Cardiac septum (tissue), 1 donor: ENCODE measurements at regions of chr2 and their contacts with region 1.

Region 1: GRCh38 chr2:27628767-27629709 is at the starts of genes CCDC121 and GPN1:
- DNase-seq: peak; percentile 95
- total RNA-seq, gene CCDC121: 3.5 TPM
- total RNA-seq, gene GPN1: 17.8 TPM

Region 2: GRCh38 chr2:27582695-27583389 is 46.2 kb before region 1 on chr2 and contains the start of gene ZNF512:
- intact Hi-C with region 1: loop called (anchors 2 kb)
- DNase-seq: peak; percentile 96
- total RNA-seq, gene ZNF512: 20.7 TPM

Region 3: DNA sequence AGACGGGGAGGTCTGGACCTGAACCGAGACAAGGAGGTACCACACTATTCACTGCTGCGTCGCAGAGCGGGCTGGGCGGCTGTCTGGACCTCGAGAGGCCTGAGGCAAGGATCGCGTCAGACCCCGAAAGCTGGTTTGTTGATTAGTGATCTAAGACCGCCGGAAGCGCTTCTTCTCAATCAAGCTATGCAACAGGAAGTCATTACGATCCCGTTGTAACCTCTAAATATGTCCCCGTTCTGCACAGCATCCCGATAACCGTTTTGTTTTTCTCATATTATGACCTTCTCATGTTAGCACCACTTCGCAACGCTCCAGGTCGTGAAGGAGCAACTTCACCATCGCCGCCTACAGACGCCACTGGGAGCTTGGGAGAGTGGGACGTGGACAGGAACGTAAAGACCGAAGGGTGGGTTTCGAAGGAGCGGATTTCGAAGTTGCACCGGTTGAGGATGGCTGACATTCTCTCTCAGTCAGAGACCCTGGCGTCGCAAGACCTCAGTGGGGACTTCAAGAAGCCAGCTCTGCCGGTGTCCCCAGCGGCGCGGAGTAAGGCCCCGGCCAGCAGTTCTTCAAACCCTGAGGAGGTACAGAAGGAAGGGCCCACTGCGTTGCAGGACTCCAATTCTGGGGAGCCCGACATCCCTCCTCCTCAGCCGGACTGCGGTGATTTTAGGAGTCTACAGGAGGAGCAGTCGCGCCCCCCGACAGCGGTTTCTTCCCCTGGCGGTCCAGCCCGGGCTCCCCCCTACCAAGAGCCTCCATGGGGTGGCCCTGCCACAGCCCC is 34.6 kb after region 1 on chr2 and contains the starts of genes SLC4A1AP and SUPT7L:
- intact Hi-C with region 1: loop called (anchors 5 kb)
- DNase-seq: peak; percentile 88
- total RNA-seq, gene SLC4A1AP: 23.4 TPM
- total RNA-seq, gene SUPT7L: 25.4 TPM